GM12878 (cell line): ENCODE measurements at regions of chr5 and their contacts with region 1.

Region 1: DNA sequence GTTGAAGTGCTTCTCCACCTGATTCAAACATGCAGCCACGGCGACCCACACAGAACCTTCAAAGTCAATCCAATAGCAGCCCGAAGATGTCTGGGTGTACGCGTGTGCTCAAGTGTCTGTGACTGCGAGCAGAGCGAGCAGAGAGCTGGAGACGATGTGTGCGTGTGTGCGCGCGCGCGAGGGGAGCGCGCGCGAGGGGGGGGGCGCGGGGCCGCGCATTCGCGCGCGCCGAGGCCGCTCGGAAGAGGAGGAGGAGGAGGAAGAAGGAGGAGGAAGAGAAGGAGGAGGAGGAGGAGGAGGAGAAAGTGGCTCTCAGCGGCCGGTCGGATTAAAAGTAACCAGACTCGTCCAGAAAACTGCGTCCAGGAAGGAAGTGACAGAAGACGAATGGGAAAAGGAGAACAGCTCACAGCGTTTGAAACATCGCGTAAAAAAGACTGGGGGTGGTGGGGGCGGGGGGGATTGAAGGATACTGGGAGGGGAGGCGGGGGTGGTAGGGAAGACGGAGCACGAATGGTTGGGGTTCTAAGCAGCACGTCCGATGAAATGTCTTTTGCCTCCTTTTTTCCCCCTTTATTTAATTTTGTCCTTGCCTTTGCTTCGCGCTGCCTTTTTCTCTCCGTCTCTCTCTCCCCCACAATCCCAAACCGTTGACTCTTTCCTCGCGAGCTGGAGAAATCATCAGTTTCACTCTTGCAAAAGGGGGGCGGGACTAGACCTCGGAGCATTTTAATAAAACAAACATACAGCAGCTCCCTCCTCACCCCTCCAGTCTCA is at the start of gene MEF2C:
- DNase-seq: no peak
- ATAC-seq: peak; percentile 45
- H3K4me3 ChIP-seq: peak within 1 kb of the TSS; percentile 85
- H3K27ac ChIP-seq: peak within 1 kb of the TSS; percentile 98
- H3K4me1 ChIP-seq: peaks cover 3% of the 10 kb centered on the region
- H3K27me3 ChIP-seq: no peaks in the 10 kb centered on the region
- CTCF ChIP-seq: no peak
- EP300 ChIP-seq: no peak
- POLR2A ChIP-seq: peak; percentile 94
- RAD21 ChIP-seq: no peak
- polyA plus RNA-seq, gene MEF2C: 143 to 147 TPM

Region 2: GRCh38 chr5:88826646-88827585 is 56.3 kb before region 1 on chr5:
- CTCF ChIA-PET with region 1: interaction called, 5 read pairs
- POLR2A ChIA-PET with region 1: interaction called, 31 read pairs
- RAD21 ChIA-PET with region 1: interaction called, 82 read pairs
- SMC1A ChIA-PET with region 1: interaction called, 182 read pairs
- in situ Hi-C with region 1: no loop called
- intact Hi-C with region 1: loop called (anchors 2 kb)
- DNase-seq: peak; percentile 98
- ATAC-seq: peak; percentile 63
- H3K4me3 ChIP-seq: peak overlapping the region; percentile 64; the same call in 1 of the 2 replicates
- H3K27ac ChIP-seq: peak overlapping the region; percentile 80
- H3K4me1 ChIP-seq: peaks cover 23% of the 10 kb centered on the region
- H3K27me3 ChIP-seq: no peaks in the 10 kb centered on the region
- CTCF ChIP-seq: no peak
- EP300 ChIP-seq: peak; percentile 95 to 96
- POLR2A ChIP-seq: peak; percentile 52; the same call in 1 of the 2 replicates
- RAD21 ChIP-seq: no peak

Region 3: DNA sequence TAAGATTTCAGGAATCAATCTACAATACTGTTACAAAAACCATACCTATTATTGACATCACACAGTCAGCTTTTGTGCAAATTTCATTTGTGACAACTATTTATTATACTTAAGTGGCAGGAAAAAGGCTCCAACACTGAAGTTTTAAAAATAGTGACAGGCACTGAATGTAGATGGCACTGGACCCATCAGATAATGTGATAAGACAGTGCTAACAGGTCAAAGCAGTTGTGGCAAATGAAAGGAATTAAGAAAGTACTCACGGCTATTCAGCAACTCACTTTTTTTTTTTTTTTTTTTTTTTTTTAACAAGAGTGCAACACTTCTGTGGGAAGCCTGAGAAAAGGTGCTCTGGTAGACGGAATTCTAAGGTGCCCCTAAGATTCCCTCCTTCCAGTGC is 114.7 kb after region 1 on chr5:
- CTCF ChIA-PET with region 1: no interaction called
- POLR2A ChIA-PET with region 1: no interaction called
- RAD21 ChIA-PET with region 1: no interaction called
- SMC1A ChIA-PET with region 1: no interaction called
- in situ Hi-C with region 1: no loop called
- intact Hi-C with region 1: no loop called
- DNase-seq: no peak
- ATAC-seq: no peak
- H3K4me3 ChIP-seq: no peak overlapping the region
- H3K27ac ChIP-seq: no peak overlapping the region
- H3K4me1 ChIP-seq: no peaks in the 10 kb centered on the region
- H3K27me3 ChIP-seq: no peaks in the 10 kb centered on the region
- CTCF ChIP-seq: no peak
- EP300 ChIP-seq: no peak
- POLR2A ChIP-seq: no peak
- RAD21 ChIP-seq: no peak

Region 4: GRCh38 chr5:89015409-89015808 is 132.2 kb after region 1 on chr5:
- CTCF ChIA-PET with region 1: no interaction called
- POLR2A ChIA-PET with region 1: no interaction called
- RAD21 ChIA-PET with region 1: no interaction called
- SMC1A ChIA-PET with region 1: no interaction called
- in situ Hi-C with region 1: no loop called
- intact Hi-C with region 1: no loop called
- DNase-seq: no peak
- ATAC-seq: no peak
- H3K4me3 ChIP-seq: no peak overlapping the region
- H3K27ac ChIP-seq: no peak overlapping the region
- H3K4me1 ChIP-seq: no peaks in the 10 kb centered on the region
- H3K27me3 ChIP-seq: no peaks in the 10 kb centered on the region
- CTCF ChIP-seq: no peak
- EP300 ChIP-seq: no peak
- POLR2A ChIP-seq: no peak
- RAD21 ChIP-seq: no peak

Region 5: DNA sequence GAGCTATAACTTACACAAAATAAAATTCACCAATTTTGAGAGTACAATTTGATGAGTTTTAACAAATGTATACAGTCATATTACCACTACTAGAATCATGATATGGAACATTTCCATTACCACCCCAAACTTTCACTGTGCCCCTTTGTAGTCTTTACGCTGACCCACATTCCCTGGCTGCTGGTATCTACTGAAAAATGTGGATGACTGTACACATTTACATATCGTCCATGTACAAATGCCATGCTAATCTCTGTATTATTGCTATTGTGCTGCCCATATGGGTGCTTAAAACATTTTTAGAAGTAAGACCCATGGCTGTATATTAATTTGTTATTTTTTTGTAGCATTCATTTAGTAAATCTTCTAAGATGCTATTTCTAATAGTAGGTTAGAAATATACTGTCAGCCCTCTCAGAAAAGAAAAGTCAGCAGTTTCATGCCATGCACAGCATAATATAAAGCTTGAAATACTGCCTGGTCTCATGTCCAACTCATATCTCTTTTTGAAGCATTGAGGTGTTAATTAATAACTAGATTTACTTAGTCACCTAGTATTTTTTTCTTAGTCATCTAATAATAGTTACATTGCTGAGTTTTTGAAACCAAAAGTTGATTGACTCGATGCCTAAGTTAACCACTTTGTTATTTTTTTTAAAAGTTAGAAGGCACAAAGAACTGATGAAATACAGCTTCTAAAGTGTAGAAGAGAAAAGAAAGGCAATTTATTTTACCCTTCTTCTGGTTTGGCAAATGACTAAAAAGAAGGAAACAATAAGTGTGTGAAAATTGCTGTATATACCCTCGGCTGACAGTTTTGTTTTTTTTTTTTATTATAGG is 188.1 kb after region 1 on chr5:
- CTCF ChIA-PET with region 1: interaction called, 5 read pairs
- POLR2A ChIA-PET with region 1: interaction called, 4 read pairs
- RAD21 ChIA-PET with region 1: interaction called, 19 read pairs
- SMC1A ChIA-PET with region 1: interaction called, 11 read pairs
- in situ Hi-C with region 1: no loop called
- intact Hi-C with region 1: loop called (anchors 2 kb)
- DNase-seq: peak; percentile 33
- ATAC-seq: peak; percentile 92
- H3K4me3 ChIP-seq: peak overlapping the region; percentile 58
- H3K27ac ChIP-seq: peak overlapping the region; percentile 92
- H3K4me1 ChIP-seq: peaks cover 14% of the 10 kb centered on the region
- H3K27me3 ChIP-seq: no peaks in the 10 kb centered on the region
- CTCF ChIP-seq: no peak
- EP300 ChIP-seq: peak; percentile 52 to 66; a peak in 2 of 4 replicates
- POLR2A ChIP-seq: no peak
- RAD21 ChIP-seq: 0 out of 2 replicates have a peak, but pooled peaks have one; percentile 2

Region 6: DNA sequence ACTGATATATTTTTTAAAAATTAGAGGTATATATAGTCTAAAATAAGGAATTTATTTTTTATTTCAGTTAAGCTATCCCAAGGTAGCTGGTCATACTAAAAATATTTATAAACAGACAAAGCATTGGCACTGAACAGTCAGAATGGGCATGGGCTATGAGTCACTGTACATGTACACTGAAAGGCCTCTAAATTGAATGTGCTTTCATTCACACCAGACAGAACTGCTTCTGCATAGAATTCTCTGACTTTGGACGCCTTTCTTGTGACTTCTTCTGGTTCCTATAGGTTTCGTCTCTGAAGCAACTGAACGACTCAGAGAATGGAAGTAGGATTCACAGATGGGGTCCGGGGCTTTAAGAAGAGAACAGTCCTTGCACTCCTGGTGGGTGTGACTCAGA is 394.6 kb after region 1 on chr5:
- CTCF ChIA-PET with region 1: no interaction called
- POLR2A ChIA-PET with region 1: no interaction called
- RAD21 ChIA-PET with region 1: no interaction called
- SMC1A ChIA-PET with region 1: interaction called, 3 read pairs
- in situ Hi-C with region 1: no loop called
- intact Hi-C with region 1: loop called (anchors 10 kb)
- DNase-seq: no peak
- ATAC-seq: peak; percentile 15; the same call in 1 of the 3 replicates
- H3K4me3 ChIP-seq: no peak overlapping the region
- H3K27ac ChIP-seq: peak overlapping the region; percentile 40
- H3K4me1 ChIP-seq: peaks cover 40% of the 10 kb centered on the region
- H3K27me3 ChIP-seq: no peaks in the 10 kb centered on the region
- CTCF ChIP-seq: no peak
- EP300 ChIP-seq: no peak
- POLR2A ChIP-seq: no peak
- RAD21 ChIP-seq: no peak

Region 7: DNA sequence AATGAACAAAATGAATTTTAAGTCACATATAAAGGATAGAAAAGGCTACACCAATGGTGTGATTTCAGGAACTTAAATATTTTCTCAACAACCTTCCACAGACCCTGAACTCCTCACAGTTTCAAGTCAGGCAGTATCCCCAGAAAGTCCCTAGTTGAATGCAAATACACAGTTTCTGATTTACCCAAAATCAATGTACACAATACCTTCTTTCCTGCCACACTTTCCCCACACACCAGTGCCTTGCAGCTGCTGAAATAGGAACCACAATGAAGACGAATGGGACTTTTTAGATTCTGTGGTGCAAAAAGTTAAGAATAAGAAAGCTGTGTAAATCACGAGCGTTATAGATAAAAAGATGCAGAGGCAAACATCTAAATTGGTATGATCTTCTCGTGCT is 552.1 kb after region 1 on chr5:
- CTCF ChIA-PET with region 1: no interaction called
- POLR2A ChIA-PET with region 1: interaction called, 3 read pairs
- RAD21 ChIA-PET with region 1: interaction called, 6 read pairs
- SMC1A ChIA-PET with region 1: no interaction called
- in situ Hi-C with region 1: loop called (anchors 10 kb)
- intact Hi-C with region 1: loop called (anchors 5 kb)
- DNase-seq: peak; percentile 90
- ATAC-seq: peak; percentile 88
- H3K4me3 ChIP-seq: 0 out of 2 replicates have a peak overlapping the region, but pooled peaks have one; percentile 41
- H3K27ac ChIP-seq: peak overlapping the region; percentile 92
- H3K4me1 ChIP-seq: peaks cover 29% of the 10 kb centered on the region; the same call in 1 of the 2 replicates
- H3K27me3 ChIP-seq: no peaks in the 10 kb centered on the region
- CTCF ChIP-seq: 0 out of 6 replicates have a peak, but pooled peaks of 1 of the 3 experiments have one; percentile 3
- EP300 ChIP-seq: peak; percentile 50 to 87; a peak in 2 of 4 replicates
- POLR2A ChIP-seq: 0 out of 2 replicates have a peak, but pooled peaks have one; percentile 28
- RAD21 ChIP-seq: peak; percentile 53

Region 8: GRCh38 chr5:89916131-89916530 is 1032.9 kb after region 1 on chr5:
- CTCF ChIA-PET with region 1: no interaction called
- POLR2A ChIA-PET with region 1: no interaction called
- RAD21 ChIA-PET with region 1: no interaction called
- SMC1A ChIA-PET with region 1: no interaction called
- in situ Hi-C with region 1: no loop called
- intact Hi-C with region 1: no loop called
- DNase-seq: no peak
- ATAC-seq: no peak
- H3K4me3 ChIP-seq: no peak overlapping the region
- H3K27ac ChIP-seq: no peak overlapping the region
- H3K4me1 ChIP-seq: no peaks in the 10 kb centered on the region
- H3K27me3 ChIP-seq: no peaks in the 10 kb centered on the region
- CTCF ChIP-seq: no peak
- EP300 ChIP-seq: no peak
- POLR2A ChIP-seq: no peak
- RAD21 ChIP-seq: no peak

Region 9: GRCh38 chr5:90184764-90185163 is 1301.5 kb after region 1 on chr5:
- CTCF ChIA-PET with region 1: no interaction called
- POLR2A ChIA-PET with region 1: no interaction called
- RAD21 ChIA-PET with region 1: no interaction called
- SMC1A ChIA-PET with region 1: no interaction called
- in situ Hi-C with region 1: no loop called
- intact Hi-C with region 1: loop called (anchors 10 kb)
- DNase-seq: no peak
- ATAC-seq: no peak
- H3K4me3 ChIP-seq: no peak overlapping the region
- H3K27ac ChIP-seq: no peak overlapping the region
- H3K4me1 ChIP-seq: no peaks in the 10 kb centered on the region
- H3K27me3 ChIP-seq: no peaks in the 10 kb centered on the region
- CTCF ChIP-seq: no peak
- EP300 ChIP-seq: no peak
- POLR2A ChIP-seq: no peak
- RAD21 ChIP-seq: no peak